AG04449 (cell line): ENCODE measurements at regions of chr5 and their contacts with region 1.

Region 1: GRCh38 chr5:36070687-36071571 is 4.2 kb upstream of the UGT3A2 start:
- DNase-seq: no peak
- H3K4me3 ChIP-seq: no peak overlapping the region
- CTCF ChIP-seq: no peak

Region 2: DNA sequence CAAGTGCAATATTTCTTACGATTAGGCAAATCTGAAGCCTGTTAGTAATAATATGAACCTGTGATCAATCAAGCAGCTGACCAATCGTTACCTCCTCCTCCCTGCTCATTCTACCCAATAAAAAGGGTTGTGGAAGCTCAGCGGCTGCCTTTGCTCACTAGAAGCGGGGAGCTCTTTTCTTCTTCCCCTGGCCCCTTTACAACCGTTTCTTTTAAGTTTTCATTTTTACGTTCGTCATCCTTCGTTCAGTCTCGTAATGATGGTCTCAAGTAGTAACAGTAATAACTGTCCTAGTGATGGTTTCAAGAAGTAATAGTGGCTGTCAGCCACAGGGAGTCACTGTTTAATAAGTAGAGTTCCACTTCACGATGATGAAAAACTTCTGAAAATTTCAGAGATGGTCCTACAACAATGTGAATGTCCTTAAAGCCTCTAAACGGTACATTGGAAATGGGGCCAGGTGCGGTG is 10.5 kb before region 1 on chr5:
- CTCF ChIA-PET with region 1: interaction called, 12 read pairs
- POLR2A ChIA-PET with region 1: no interaction called
- DNase-seq: no peak
- H3K4me3 ChIP-seq: no peak overlapping the region; the same call in 1 of the 2 replicates
- CTCF ChIP-seq: peak; percentile 12